ENCODE measurements at regions of chr3 and their contacts with region 1.

Region 1: DNA sequence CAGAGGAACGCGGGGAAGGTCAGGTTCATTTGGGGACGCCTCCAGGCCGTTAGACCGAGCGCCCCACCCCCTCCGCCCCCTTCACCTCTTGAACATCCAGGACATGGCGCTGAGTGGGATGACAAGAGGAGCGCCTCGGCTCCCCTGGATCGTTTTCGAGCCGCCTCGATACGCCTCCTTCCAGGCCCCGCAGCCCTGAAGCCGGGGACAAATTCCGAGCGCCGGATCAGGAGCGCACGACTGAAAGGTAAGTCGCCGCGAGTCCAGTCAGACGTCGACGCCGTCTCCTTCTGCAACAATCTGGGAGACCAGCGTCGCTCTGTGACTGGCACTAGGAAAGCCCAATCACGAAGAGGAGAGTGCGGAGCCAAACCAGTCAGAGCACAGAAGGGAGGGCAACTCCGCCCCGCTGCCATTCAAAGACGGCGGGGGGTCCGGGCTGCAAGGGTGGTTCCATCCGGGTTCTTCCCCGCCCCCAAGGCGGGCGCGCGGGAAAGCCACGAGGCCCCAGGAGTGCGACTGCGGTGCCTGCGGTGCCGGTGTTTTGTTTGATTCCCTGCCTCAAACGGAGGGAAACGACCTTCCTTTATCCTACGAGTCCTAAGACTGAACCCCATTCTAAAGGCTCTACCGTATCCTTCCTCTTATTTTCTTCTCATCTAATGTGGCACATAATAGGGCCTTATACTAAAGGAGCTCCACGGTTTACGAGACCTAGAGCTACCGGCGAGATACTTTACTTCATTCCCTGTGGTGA is at the start of gene HLTF:
- DNase-seq: peak; percentile 90 to 93
- H3K4me3 ChIP-seq: peak within 1 kb of the TSS; percentile 79
- H3K27ac ChIP-seq: no peak within 1 kb of the TSS
- H3K4me1 ChIP-seq: peaks cover 13% of the 10 kb centered on the region; the same call in 1 of the 2 replicates
- H3K27me3 ChIP-seq: no peaks in the 10 kb centered on the region
- CTCF ChIP-seq: no peak
- total RNA-seq, gene HLTF: 32.2 and 38.3 TPM in 2 replicates

Region 2: GRCh38 chr3:148815316-148816110 is 270.9 kb before region 1 on chr3:
- CTCF ChIA-PET with region 1: no interaction called
- POLR2A ChIA-PET with region 1: no interaction called
- intact Hi-C with region 1: no loop called
- DNase-seq: no peak
- H3K4me3 ChIP-seq: no peak overlapping the region
- H3K27ac ChIP-seq: no peak overlapping the region
- H3K4me1 ChIP-seq: no peaks in the 10 kb centered on the region
- H3K27me3 ChIP-seq: no peaks in the 10 kb centered on the region
- CTCF ChIP-seq: no peak

Region 3: GRCh38 chr3:148991194-148992026 is 95.0 kb before region 1 on chr3 and contains the start of gene GYG1:
- CTCF ChIA-PET with region 1: no interaction called
- POLR2A ChIA-PET with region 1: no interaction called
- intact Hi-C with region 1: loop called (anchors 5 kb)
- DNase-seq: peak; percentile 68 to 77
- H3K4me3 ChIP-seq: peak within 1 kb of the TSS; percentile 81
- H3K27ac ChIP-seq: peak within 1 kb of the TSS; percentile 53
- H3K4me1 ChIP-seq: peaks cover 10% of the 10 kb centered on the region; the same call in 1 of the 2 replicates
- H3K27me3 ChIP-seq: no peaks in the 10 kb centered on the region
- CTCF ChIP-seq: no peak; the same call in 1 of the 2 replicates
- total RNA-seq, gene GYG1: 16.5 and 20.3 TPM in 2 replicates

Region 4: GRCh38 chr3:149042789-149043386 is 43.5 kb before region 1 on chr3:
- CTCF ChIA-PET with region 1: no interaction called
- POLR2A ChIA-PET with region 1: no interaction called
- intact Hi-C with region 1: loop called (anchors 1 kb)
- DNase-seq: no peak
- H3K4me3 ChIP-seq: no peak overlapping the region
- H3K27ac ChIP-seq: peak overlapping the region; percentile 64
- H3K4me1 ChIP-seq: peaks cover 10% of the 10 kb centered on the region
- H3K27me3 ChIP-seq: no peaks in the 10 kb centered on the region
- CTCF ChIP-seq: no peak

Region 5: DNA sequence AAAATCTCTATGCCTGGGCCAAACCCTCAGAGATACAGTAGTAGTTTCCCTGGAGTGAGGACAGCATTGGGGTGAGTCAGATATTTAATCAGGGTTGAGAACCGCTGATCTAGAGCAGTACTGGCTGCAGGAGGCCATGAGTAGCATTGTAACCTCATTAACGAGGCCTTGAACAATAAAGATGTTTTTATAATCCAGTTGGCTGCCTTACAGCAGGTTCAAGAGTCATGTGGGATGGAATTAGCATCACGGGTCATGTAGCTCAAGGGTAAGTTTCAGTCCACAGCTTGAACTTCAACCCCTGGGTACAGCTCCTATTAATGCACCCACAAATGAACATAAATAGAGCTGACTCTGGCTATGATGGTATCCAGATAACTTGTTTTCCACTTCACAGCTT is 48.2 kb after region 1 on chr3:
- CTCF ChIA-PET with region 1: no interaction called
- POLR2A ChIA-PET with region 1: no interaction called
- intact Hi-C with region 1: no loop called
- DNase-seq: no peak
- H3K4me3 ChIP-seq: no peak overlapping the region
- H3K27ac ChIP-seq: no peak overlapping the region
- H3K4me1 ChIP-seq: peaks cover 13% of the 10 kb centered on the region
- H3K27me3 ChIP-seq: no peaks in the 10 kb centered on the region
- CTCF ChIP-seq: no peak

Measured in PC-9 (cell line).